Tibial artery (tissue), 4 donors: ENCODE measurements at regions of chr2 and their contacts with region 1.

Region 1: GRCh38 chr2:11477994-11478393 is 12.0 kb upstream of the E2F6 start:
- DNase-seq: peak; percentile 90 to 93
- H3K4me3 ChIP-seq: no peak overlapping the region
- H3K27ac ChIP-seq: no peak overlapping the region
- H3K4me1 ChIP-seq: peaks cover 0 to 10% (median 6%) of the 10 kb centered on the region in 4 donors
- H3K27me3 ChIP-seq: peaks cover 0 to 33% of the 10 kb centered on the region in 2 donors
- CTCF ChIP-seq: peak; percentile 78

Region 2: GRCh38 chr2:10931710-10932255 is 546.2 kb before region 1 on chr2:
- intact Hi-C with region 1: no loop called
- DNase-seq: no peak
- H3K4me3 ChIP-seq: no peak overlapping the region
- H3K27ac ChIP-seq: no peak overlapping the region
- H3K4me1 ChIP-seq: no peaks in the 10 kb centered on the region
- H3K27me3 ChIP-seq: peaks cover 0 to 40% of the 10 kb centered on the region in 2 donors
- CTCF ChIP-seq: no peak

Region 3: GRCh38 chr2:11292464-11293255 is 185.3 kb before region 1 on chr2:
- intact Hi-C with region 1: no loop called
- DNase-seq: no peak
- H3K4me3 ChIP-seq: no peak overlapping the region
- H3K27ac ChIP-seq: no peak overlapping the region
- H3K4me1 ChIP-seq: peaks cover 0 to 91% (median 10%) of the 10 kb centered on the region in 4 donors
- H3K27me3 ChIP-seq: no peaks in the 10 kb centered on the region
- CTCF ChIP-seq: no peak

Region 4: GRCh38 chr2:11583840-11584524 is 106.0 kb after region 1 on chr2:
- intact Hi-C with region 1: loop called (anchors 5 kb)
- DNase-seq: peak in 1 of 2 donors; percentile 68
- H3K4me3 ChIP-seq: no peak overlapping the region
- H3K27ac ChIP-seq: no peak overlapping the region
- H3K4me1 ChIP-seq: peaks cover 0 to 5% (median 2%) of the 10 kb centered on the region in 4 donors
- H3K27me3 ChIP-seq: peaks cover 0 to 16% of the 10 kb centered on the region in 2 donors
- CTCF ChIP-seq: peak; percentile 32 to 39